Left ventricle myocardium inferior (tissue), 1 donor: ENCODE measurements at regions of chr4 and their contacts with region 1.

Region 1: GRCh38 chr4:122244764-122245163 is 92.6 kb downstream of the BLTP1 start:
- DNase-seq: no peak
- H3K4me3 ChIP-seq: no peak overlapping the region
- H3K27ac ChIP-seq: no peak overlapping the region
- H3K4me1 ChIP-seq: no peaks in the 10 kb centered on the region
- H3K27me3 ChIP-seq: no peaks in the 10 kb centered on the region
- CTCF ChIP-seq: no peak

Region 2: GRCh38 chr4:122082661-122083060 is 162.1 kb before region 1 on chr4:
- intact Hi-C with region 1: no loop called
- DNase-seq: no peak
- H3K4me3 ChIP-seq: no peak overlapping the region
- H3K27ac ChIP-seq: no peak overlapping the region
- H3K4me1 ChIP-seq: peaks cover 7% of the 10 kb centered on the region
- H3K27me3 ChIP-seq: peaks cover 7% of the 10 kb centered on the region
- CTCF ChIP-seq: no peak

Region 3: GRCh38 chr4:122178961-122179360 is 65.8 kb before region 1 on chr4:
- intact Hi-C with region 1: loop called (anchors 2 kb)
- DNase-seq: no peak
- H3K4me3 ChIP-seq: no peak overlapping the region
- H3K27ac ChIP-seq: no peak overlapping the region
- H3K4me1 ChIP-seq: no peaks in the 10 kb centered on the region
- H3K27me3 ChIP-seq: no peaks in the 10 kb centered on the region
- CTCF ChIP-seq: no peak

Region 4: DNA sequence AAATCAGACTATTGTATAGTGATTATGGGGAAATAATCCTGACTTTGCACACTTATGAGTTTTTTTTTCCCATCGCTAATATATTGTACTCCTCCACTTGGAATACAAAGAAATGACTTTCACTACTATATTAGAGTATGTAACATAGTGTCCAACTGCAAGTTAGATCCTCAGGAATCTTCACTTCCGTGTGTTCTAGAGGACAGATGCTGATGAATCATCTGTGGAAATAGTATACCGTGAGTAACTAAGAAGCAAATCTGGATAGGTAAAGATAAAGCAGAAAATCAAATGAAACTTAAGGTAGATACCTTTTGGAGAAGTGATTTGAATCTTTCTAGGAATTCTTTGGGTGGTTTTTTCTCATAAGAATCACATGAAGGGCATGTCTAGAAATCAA is 367.8 kb after region 1 on chr4:
- intact Hi-C with region 1: no loop called
- DNase-seq: no peak
- H3K4me3 ChIP-seq: no peak overlapping the region
- H3K27ac ChIP-seq: no peak overlapping the region
- H3K4me1 ChIP-seq: no peaks in the 10 kb centered on the region
- H3K27me3 ChIP-seq: no peaks in the 10 kb centered on the region
- CTCF ChIP-seq: no peak